ENCODE measurements at regions of chr9 and their contacts with region 1.

Region 1: DNA sequence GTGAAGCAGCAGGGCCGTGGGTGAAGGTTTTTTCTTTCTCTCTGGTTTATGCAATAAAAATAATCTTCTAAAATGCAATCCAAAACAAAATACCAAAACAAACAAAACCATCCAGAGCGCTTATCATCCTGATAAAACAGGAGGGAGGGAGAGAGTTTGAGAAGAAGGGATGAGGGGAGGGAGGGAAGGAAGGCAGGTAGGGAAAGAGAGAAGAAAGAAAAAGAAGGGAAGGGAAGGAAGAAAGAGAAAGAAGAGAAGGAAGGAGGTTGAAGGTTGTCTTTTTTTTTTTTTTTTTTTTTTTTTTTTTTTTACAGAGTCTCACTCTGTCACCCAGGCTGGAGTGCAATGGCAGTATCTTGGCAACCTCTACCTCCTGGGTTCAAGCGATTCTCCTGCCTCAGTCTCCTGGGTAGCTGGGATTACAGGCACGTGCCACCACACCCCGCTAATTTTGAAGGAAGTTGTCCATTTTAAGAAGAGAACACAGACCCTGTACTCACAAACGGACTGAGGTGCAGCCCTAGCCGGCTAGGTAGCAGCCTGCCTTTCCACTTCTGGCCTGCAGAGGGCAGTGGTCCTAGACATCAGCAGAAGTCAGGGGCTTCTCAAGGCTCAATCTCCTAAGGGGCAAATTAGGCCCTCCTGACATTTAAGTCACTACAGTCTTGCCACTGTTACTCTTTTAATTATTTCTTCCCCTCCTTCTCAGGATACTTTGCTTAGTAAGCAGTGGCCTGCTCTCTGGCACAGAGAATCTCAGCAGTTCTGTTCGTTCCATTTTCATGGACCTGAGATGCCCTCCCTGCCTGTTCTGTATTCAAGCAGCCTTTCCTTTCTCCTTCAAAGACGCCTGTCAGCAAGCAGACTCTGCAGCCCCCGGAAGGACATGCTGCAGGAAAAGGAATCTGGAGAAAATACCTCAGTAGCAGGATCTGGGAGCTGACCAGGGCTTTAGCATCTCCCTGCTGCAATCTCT is 76.4 kb downstream of the EPB41L4B start:
- DNase-seq: peak; percentile 36 to 58 (median 47)
- H3K4me3 ChIP-seq: no peak overlapping the region
- H3K4me3 Mint-ChIP-seq: peak overlapping the region in 2 of 8 donors; percentile 29 to 48
- H3K27ac ChIP-seq: no peak overlapping the region
- H3K27ac Mint-ChIP-seq: no peak overlapping the region
- H3K4me1 ChIP-seq: no peaks in the 10 kb centered on the region
- H3K4me1 Mint-ChIP-seq: peaks cover 0 to 2% (median 0%) of the 10 kb centered on the region in 4 donors
- H3K27me3 ChIP-seq: no peaks in the 10 kb centered on the region
- H3K27me3 Mint-ChIP-seq: peaks cover 4 to 21% of the 10 kb centered on the region in 2 donors

Region 2: DNA sequence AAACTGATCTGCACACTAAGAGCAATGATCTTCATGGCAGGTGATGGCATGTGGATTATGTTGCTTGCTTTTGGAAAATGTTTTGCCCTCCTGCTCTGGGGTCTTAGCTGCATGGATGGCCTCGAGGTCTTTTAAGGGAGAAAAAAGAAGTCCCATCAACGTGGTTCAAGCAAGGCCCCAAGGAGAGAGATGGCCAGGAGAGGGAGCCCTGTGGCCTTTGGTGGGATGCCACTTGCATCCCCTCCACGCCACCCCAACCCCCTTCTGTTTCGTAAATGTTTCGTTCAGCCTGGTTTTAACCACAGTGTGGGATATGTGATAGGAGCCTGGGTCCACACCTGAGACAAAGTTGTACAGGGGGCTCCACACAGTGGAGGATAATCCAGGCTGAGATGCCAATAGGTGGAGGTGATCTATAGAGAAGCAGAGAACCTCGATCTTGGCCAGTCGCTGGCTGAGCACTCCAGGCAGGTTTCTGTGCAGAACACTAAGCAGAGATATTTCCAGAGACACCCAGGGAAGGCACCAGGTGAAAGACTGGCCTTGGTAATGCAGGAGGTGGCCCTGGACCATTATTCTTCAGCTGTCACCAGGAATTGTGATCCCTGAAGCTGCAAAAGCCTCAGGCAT is 51.6 kb before region 1 on chr9:
- CTCF ChIA-PET with region 1: no interaction called
- POLR2A ChIA-PET with region 1: no interaction called
- intact Hi-C with region 1: no loop called
- DNase-seq: no peak
- H3K4me3 ChIP-seq: no peak overlapping the region
- H3K4me3 Mint-ChIP-seq: no peak overlapping the region
- H3K27ac ChIP-seq: no peak overlapping the region
- H3K27ac Mint-ChIP-seq: no peak overlapping the region
- H3K4me1 ChIP-seq: no peaks in the 10 kb centered on the region
- H3K4me1 Mint-ChIP-seq: no peaks in the 10 kb centered on the region
- H3K27me3 ChIP-seq: no peaks in the 10 kb centered on the region
- H3K27me3 Mint-ChIP-seq: no peaks in the 10 kb centered on the region

Region 3: DNA sequence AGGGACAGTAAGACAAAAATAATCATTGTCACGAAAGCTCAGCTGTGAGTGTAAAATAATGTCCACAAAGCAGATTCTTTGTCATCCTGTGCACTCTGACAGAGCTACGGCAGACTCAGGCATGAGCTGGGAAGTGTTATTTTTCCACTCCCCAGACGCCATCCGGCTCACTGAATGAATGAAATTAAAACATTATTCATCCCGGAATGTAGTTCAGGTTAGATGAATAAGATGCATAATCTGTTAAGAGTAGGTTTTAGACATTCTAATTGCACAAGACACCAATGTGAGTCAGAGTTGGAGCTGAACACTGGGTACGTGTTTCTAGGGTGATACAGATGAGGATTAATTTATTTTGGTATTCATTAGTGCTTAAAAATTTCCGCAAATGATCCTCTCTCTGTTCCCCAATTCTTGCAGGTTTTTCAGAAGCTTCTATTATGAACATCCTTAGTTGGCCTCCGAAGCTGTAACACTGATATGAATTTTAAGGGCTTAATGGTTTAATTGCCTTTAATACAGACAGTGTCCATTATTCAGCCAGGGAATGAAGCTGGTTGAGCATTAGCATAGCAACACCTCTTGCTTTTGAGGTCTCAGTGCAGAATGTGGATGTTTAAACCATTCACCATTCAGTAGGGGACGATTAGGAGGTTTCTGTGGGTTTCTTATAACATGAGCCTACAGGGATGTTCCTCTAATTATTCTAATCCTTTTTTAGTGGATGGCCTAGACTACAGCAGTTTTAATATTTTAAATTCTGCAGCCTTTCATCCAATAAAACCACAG is 11.8 kb before region 1 on chr9:
- CTCF ChIA-PET with region 1: interaction called, 10 read pairs
- POLR2A ChIA-PET with region 1: no interaction called
- intact Hi-C with region 1: no loop called
- DNase-seq: no peak
- H3K4me3 ChIP-seq: no peak overlapping the region
- H3K4me3 Mint-ChIP-seq: no peak overlapping the region
- H3K27ac ChIP-seq: no peak overlapping the region
- H3K27ac Mint-ChIP-seq: no peak overlapping the region
- H3K4me1 ChIP-seq: no peaks in the 10 kb centered on the region
- H3K4me1 Mint-ChIP-seq: no peaks in the 10 kb centered on the region
- H3K27me3 ChIP-seq: no peaks in the 10 kb centered on the region
- H3K27me3 Mint-ChIP-seq: peaks cover 12 to 21% of the 10 kb centered on the region in 2 donors

Region 4: GRCh38 chr9:109320742-109321448 is 76.5 kb after region 1 on chr9 and contains the start of gene EPB41L4B:
- CTCF ChIA-PET with region 1: interaction called, 5 read pairs
- POLR2A ChIA-PET with region 1: no interaction called
- intact Hi-C with region 1: loop called (anchors 1 kb)
- DNase-seq: peak; percentile 77 to 83 (median 79)
- H3K4me3 ChIP-seq: no peak within 1 kb of the TSS
- H3K4me3 Mint-ChIP-seq: peak within 1 kb of the TSS; percentile 78 to 93 (median 84)
- H3K27ac ChIP-seq: no peak within 1 kb of the TSS
- H3K27ac Mint-ChIP-seq: peak within 1 kb of the TSS in 2 of 7 donors; percentile 22 to 71
- H3K4me1 ChIP-seq: peaks cover 8% of the 10 kb centered on the region
- H3K4me1 Mint-ChIP-seq: peaks cover 6 to 24% (median 8%) of the 10 kb centered on the region in 4 donors
- H3K27me3 ChIP-seq: peaks cover 7% of the 10 kb centered on the region
- H3K27me3 Mint-ChIP-seq: peaks cover 43 to 60% of the 10 kb centered on the region in 2 donors
- total RNA-seq, gene EPB41L4B: not detected

Region 5: GRCh38 chr9:109469646-109470358 is 225.4 kb after region 1 on chr9:
- CTCF ChIA-PET with region 1: interaction called, 4 read pairs
- POLR2A ChIA-PET with region 1: no interaction called
- intact Hi-C with region 1: loop called (anchors 1 kb)
- DNase-seq: peak in 4 of 5 donors; percentile 19 to 33 (median 25)
- H3K4me3 ChIP-seq: no peak overlapping the region
- H3K4me3 Mint-ChIP-seq: no peak overlapping the region
- H3K27ac ChIP-seq: no peak overlapping the region
- H3K27ac Mint-ChIP-seq: no peak overlapping the region
- H3K4me1 ChIP-seq: no peaks in the 10 kb centered on the region
- H3K4me1 Mint-ChIP-seq: no peaks in the 10 kb centered on the region
- H3K27me3 ChIP-seq: no peaks in the 10 kb centered on the region
- H3K27me3 Mint-ChIP-seq: peaks cover 4 to 8% of the 10 kb centered on the region in 2 donors